Activated CD8-positive, alpha-beta T cell treated with anti-CD3 and anti-CD28 coated beads, Interleukin-2, amount 10 ng/mL, durations not matched to agents 7 days and 5 days (primary cell): ENCODE measurements at regions of chr17 and their contacts with region 1.

Region 1: GRCh38 chr17:8997994-8998628 is 23.2 kb upstream of the NTN1 start:
- DNase-seq: peak; percentile 85
- ATAC-seq: peak; percentile 82
- H3K4me3 Mint-ChIP-seq: no peak overlapping the region
- H3K27ac Mint-ChIP-seq: no peak overlapping the region
- H3K4me1 Mint-ChIP-seq: peaks cover 18% of the 10 kb centered on the region
- H3K27me3 Mint-ChIP-seq: peaks cover 32% of the 10 kb centered on the region

Region 2: DNA sequence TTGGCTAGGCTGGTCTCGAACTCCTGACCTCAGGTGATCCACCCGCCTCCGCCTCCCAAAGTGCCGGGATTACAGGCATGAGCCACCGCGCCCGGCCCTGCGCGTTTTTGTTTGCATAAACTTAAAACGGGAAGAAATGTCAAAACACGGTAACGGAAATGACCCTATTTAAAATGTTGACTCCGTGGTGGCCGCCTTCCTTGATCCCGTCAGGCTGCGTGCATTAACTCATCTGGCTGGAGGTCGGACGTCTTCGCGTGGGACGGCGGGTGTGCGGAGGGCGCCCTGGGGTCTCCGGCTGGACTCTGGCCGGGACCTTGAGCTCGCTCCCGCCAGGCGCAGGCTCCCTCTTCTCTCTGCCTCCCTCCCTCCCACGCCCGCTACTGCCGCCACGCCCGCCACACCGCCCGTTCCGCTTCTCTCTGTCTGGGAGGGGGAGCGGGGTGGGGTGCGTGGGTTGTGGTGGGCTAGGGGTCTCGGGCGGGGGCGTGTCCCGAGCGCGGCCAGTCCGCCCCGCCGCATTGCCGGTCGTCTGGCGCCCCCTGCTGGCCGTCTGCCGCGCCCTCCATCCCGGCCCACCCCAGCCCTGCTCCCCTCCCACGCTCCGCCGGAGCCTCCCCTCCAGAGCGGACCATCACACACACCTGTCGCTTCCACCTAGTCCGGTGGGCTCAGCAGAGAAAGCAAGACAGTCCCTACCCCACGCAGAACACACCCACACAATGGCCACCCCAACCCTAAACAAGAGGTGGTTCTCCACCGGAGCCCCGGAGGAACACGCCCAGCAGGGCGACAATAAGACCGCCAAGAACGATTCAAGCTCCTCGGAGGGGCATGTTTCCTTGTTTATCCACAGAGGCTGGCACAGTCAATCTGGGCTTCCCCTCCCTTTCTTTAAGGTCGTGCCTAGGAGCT is 252.3 kb before region 1 on chr17:
- CTCF ChIA-PET with region 1: interaction called, 25 read pairs
- POLR2A ChIA-PET with region 1: interaction called, 4 read pairs
- DNase-seq: peak; percentile 84
- ATAC-seq: peak; percentile 90
- H3K4me3 Mint-ChIP-seq: peak overlapping the region; percentile 83
- H3K27ac Mint-ChIP-seq: peak overlapping the region; percentile 91
- H3K4me1 Mint-ChIP-seq: peaks cover 18% of the 10 kb centered on the region
- H3K27me3 Mint-ChIP-seq: peaks cover 14% of the 10 kb centered on the region

Region 3: GRCh38 chr17:8894673-8895578 is 103.2 kb before region 1 on chr17:
- CTCF ChIA-PET with region 1: interaction called, 43 read pairs
- POLR2A ChIA-PET with region 1: interaction called, 3 read pairs
- DNase-seq: peak; percentile 75
- ATAC-seq: no peak
- H3K4me3 Mint-ChIP-seq: no peak overlapping the region
- H3K27ac Mint-ChIP-seq: peak overlapping the region; percentile 26
- H3K4me1 Mint-ChIP-seq: peaks cover 71% of the 10 kb centered on the region
- H3K27me3 Mint-ChIP-seq: no peaks in the 10 kb centered on the region

Region 4: DNA sequence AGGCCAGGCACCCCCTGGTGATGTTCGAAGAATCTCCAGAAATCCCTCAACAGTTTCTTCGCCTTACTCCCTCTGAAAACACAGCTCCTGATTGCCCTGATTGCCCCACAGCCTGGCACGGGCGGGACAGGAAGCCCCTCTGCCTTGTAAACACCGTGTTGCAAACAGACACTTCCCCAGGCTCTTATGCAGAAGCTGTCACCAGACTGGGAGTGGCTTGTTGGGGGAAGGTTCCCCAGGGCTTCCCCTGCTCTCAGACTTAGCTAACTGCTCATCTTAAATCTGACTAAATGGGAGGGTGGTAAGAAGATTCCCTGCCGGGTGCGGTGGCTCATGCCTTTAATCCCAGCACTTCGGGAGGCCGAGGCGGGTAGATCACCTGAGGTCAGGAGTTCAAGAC is 43.8 kb before region 1 on chr17:
- CTCF ChIA-PET with region 1: interaction called, 17 read pairs
- POLR2A ChIA-PET with region 1: no interaction called
- DNase-seq: peak; percentile 82
- ATAC-seq: peak; percentile 86
- H3K4me3 Mint-ChIP-seq: peak overlapping the region; percentile 53
- H3K27ac Mint-ChIP-seq: peak overlapping the region; percentile 87
- H3K4me1 Mint-ChIP-seq: peaks cover 96% of the 10 kb centered on the region
- H3K27me3 Mint-ChIP-seq: no peaks in the 10 kb centered on the region

Region 5: DNA sequence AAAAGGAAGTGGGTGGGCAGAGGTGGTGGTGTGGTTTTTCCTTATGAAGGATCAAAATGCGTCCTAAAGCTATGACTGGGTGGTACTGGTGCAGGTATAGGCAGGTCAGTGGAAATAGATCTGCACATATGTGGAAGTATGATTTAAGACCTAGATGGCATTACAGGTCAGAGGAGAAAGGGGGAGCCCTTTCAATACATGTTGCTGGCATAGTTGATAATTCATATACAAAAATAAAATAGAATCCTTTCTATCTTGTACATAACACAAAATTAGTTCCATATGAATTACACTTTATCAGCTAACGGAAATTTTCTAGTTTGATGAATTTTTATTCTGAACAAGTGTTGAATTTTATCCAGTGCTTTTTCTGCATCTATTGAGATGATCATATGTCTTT is 11.8 kb before region 1 on chr17:
- CTCF ChIA-PET with region 1: interaction called, 26 read pairs
- POLR2A ChIA-PET with region 1: no interaction called
- DNase-seq: no peak
- ATAC-seq: no peak
- H3K4me3 Mint-ChIP-seq: no peak overlapping the region
- H3K27ac Mint-ChIP-seq: peak overlapping the region; percentile 56
- H3K4me1 Mint-ChIP-seq: peaks cover 13% of the 10 kb centered on the region
- H3K27me3 Mint-ChIP-seq: no peaks in the 10 kb centered on the region

Region 6: DNA sequence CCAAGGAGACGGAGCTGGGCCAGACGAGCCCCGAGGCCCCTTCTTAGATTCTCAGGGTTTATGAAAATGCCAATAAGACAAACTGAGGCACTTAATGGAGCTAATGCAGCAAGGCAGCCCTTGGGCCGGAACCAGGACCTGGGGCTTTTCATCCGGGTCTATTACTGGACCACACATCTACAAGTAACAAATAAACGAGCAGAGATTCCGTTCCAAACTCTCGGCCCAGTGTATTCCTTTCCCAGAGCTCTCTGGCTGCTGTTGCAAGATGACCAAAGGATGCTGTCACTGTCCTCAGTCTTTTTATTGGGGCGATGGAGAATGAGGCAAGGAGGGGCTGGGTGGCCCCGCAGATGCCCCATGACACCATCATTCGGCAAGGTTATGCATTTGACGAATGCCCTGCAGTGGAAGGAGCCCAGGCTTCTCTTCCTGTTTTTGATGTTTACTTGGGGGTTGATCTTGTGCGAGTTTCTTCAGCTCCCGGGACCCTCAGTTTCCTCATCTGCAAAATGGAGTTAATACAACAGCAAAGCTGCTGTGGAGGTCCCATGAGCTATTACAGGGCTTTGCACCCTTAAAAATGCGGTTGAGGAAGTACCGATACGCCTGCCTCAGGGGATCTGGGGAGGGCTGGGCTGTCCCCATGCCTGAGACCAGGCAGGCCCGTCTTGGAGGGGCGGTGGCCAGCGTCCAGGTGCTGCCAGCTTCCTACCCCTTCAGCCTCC is 22.1 kb after region 1 on chr17:
- CTCF ChIA-PET with region 1: interaction called, 10 read pairs
- POLR2A ChIA-PET with region 1: no interaction called
- DNase-seq: no peak
- ATAC-seq: peak; percentile 4
- H3K4me3 Mint-ChIP-seq: peak overlapping the region; percentile 51
- H3K27ac Mint-ChIP-seq: no peak overlapping the region
- H3K4me1 Mint-ChIP-seq: peaks cover 8% of the 10 kb centered on the region
- H3K27me3 Mint-ChIP-seq: peaks cover 48% of the 10 kb centered on the region

Region 7: DNA sequence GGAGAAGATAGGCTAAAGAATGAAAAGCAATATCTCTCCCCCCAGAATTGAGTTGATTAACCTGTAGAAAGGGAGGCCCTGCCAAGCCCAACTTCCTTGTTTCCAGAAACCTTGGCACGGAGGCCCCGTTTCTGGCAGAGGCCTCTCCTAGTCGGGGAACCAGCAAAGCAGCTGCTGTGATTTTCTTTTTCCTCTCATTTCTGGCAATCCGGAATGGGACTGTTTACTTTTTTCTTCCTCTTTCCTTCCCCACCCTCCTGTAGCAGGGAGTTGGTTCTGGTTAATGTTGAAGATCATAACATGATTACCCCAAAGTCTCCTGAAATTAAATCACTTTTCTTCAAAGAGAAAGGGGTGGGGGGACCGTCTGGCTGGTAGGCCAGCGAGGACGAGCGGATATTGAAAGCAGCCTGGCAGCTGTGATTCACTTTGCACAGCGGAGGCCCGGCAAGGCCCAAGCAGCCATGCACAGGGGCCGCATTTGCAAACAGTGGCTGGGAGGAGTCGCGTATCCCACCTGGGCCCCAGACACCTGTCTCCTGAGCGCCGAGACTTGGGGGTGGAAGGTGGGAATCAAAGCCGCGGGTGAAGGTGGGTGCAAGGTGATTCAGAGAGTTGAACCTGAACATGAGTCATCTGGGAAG is 74.7 kb after region 1 on chr17:
- CTCF ChIA-PET with region 1: no interaction called
- POLR2A ChIA-PET with region 1: no interaction called
- DNase-seq: no peak
- ATAC-seq: no peak
- H3K4me3 Mint-ChIP-seq: no peak overlapping the region
- H3K27ac Mint-ChIP-seq: no peak overlapping the region
- H3K4me1 Mint-ChIP-seq: no peaks in the 10 kb centered on the region
- H3K27me3 Mint-ChIP-seq: peaks cover 4% of the 10 kb centered on the region